A549 (cell line): ENCODE measurements at regions of chr19 and their contacts with region 1.

Region 1: GRCh38 chr19:17938092-17938845 is 5.5 kb downstream of the CCDC124 start:
- DNase-seq: peak; percentile 76 to 88
- ATAC-seq: peak; percentile 95 to 97
- H3K4me3 ChIP-seq: no peak overlapping the region
- H3K27ac ChIP-seq: 0 out of 6 replicates have a peak overlapping the region, but pooled peaks of 1 of the 2 experiments have one; percentile 20
- H3K4me1 ChIP-seq: peaks cover 9% of the 10 kb centered on the region
- CTCF ChIP-seq: peak; percentile 79
- EP300 ChIP-seq: no peak
- POLR2A ChIP-seq: no peak
- RAD21 ChIP-seq: peak; percentile 84 to 93

Region 2: DNA sequence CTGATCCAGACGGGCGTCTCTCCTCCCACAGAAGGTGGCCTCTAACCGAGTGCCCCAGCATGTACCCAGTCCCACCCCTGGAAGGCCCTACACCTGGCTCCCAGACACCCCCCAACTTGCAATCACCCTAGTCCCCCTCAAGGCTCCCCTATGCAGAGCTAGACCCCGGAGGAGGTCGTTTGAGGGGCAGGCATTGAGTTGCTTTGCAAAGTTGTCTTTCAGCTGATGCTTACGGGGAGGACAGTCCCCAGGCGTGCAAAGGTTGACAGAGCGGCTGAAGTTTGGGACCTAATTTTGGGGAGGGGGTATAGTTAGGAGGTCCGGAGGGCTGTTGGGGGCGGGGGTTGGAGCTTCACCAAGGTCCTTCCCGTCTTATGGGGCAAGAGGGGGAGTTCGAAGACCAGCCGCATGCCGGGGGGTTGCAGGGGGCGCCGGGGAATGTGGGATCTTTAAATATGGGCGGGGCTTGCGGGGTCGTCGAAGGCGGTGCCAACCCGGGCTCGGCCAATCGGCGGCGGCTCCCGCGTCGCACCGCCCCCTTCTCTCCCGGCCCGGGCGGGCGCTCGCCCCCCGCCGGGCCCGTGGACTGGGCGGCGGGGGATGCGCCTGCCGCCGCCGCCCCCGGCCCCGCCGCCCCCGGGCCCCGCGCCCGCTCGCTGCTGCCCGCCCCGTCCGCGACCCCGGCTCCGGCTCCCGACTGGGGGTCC is 28.4 kb after region 1 on chr19 and contains the start of gene KCNN1:
- CTCF ChIA-PET with region 1: interaction called, 17 read pairs
- POLR2A ChIA-PET with region 1: no interaction called
- DNase-seq: peak in 1 of 2 experiments; percentile 71
- ATAC-seq: peak; percentile 61 to 74; a peak in 4 of 6 replicates
- H3K4me3 ChIP-seq: peak within 1 kb of the TSS; percentile 57
- H3K27ac ChIP-seq: peak within 1 kb of the TSS; percentile 58 to 80; a peak in 4 of 6 replicates
- H3K4me1 ChIP-seq: peaks cover 3% of the 10 kb centered on the region; the same call in 1 of the 3 replicates
- CTCF ChIP-seq: no peak
- EP300 ChIP-seq: no peak
- POLR2A ChIP-seq: no peak
- RAD21 ChIP-seq: no peak
- polyA plus RNA-seq, gene KCNN1: 0.20 and 0.43 TPM in 2 replicates

Region 3: DNA sequence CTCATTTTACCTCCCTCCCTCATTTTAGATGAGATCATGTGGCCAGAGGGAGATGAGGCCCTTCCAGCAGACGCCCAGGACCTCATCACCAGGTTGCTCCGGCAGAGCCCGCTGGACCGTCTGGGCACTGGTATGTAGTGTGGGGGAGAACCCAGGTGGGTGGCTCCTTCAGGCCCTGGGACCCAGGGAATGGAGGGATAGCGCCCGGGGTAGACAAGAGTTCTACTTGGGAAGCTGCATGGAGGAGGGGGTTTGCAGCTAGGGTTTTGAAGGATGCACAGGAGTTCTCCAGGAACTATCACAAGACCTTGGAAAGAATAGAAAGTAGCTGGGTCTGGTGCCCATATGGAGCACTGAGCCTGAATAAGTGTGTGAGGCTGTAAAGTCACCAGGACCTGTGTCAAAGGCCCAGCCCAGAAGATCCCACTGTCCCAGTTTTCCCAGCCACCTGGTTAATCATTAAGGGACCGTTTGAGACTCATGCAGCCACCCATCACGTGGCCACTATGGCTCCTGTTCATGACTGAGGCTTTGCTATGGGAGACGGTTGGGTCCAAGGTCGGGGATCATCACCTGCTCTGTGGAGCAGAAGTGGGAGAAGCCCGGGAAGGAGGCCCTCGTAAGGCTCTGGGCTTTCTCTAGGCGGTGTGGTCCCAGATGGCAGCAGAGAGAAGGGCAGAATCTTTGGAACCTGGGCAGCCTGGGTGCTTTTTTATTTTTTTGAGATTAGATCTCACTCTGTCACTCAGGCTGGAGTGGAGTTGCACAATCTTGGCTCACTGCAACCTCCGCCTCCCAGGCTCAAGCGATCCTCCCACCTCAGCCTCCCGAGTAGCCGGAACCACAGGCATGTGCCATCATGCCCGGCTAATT is 197.7 kb after region 1 on chr19:
- CTCF ChIA-PET with region 1: no interaction called
- POLR2A ChIA-PET with region 1: no interaction called
- DNase-seq: peak in 1 of 2 experiments; percentile 41
- ATAC-seq: peak in 1 of 2 experiments; percentile 27; a peak in 1 of 6 replicates
- H3K4me3 ChIP-seq: no peak overlapping the region
- H3K27ac ChIP-seq: peak overlapping the region; percentile 27 to 37; a peak in 1 of 6 replicates
- H3K4me1 ChIP-seq: 0 out of 3 replicates have a peak, but pooled peaks cover 9% of the 10 kb centered on the region
- CTCF ChIP-seq: no peak
- EP300 ChIP-seq: no peak
- POLR2A ChIP-seq: no peak
- RAD21 ChIP-seq: no peak